Activated CD4-positive, alpha-beta memory T cell treated with anti-CD3 and anti-CD28 coated beads for 36 hours (primary cell): ENCODE measurements at regions of chr4 and their contacts with region 1.

Region 1: DNA sequence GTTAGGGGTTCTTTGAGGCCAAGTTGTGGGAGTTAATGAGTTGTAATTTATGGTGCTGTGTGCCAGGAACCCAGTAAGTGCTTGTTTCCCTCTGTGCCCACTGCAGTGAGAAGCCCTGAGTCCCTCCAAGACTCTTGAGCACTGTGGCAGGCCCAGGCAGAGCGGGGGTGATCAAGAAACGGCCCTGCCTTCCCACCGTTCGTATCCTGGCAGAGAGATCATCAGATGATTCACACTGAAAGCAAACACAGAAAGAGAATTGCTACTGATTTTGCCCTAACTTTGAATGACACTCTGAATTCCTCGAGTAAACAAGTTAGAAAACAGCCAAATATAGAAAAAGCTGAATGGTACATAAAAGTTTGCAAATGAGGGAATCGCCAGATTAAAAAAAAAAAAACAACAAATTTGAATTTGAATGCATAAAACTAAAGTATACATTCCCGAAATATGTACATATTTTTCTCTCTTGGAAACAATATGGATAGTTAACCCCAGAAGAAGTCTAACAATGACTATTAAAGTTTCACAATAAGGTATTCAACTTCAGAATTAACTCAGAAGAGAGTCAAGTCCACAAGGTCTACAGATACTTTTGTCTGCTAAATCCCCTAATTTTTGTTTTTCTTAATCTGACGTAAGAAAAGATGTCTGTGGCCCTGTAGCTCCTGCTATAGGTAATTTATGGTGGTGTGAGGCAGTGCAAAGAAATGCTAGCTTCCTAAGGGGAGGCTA is 71.8 kb downstream of the AFAP1 start:
- DNase-seq: peak; percentile 68
- H3K4me3 Mint-ChIP-seq: no peak overlapping the region
- H3K27ac Mint-ChIP-seq: peak overlapping the region; percentile 83
- H3K4me1 Mint-ChIP-seq: peaks cover 33% of the 10 kb centered on the region
- H3K27me3 Mint-ChIP-seq: peaks cover 1% of the 10 kb centered on the region

Region 2: GRCh38 chr4:7857238-7857701 is 10.6 kb before region 1 on chr4:
- CTCF ChIA-PET with region 1: interaction called, 4 read pairs
- POLR2A ChIA-PET with region 1: interaction called, 4 read pairs
- intact Hi-C with region 1: loop called (anchors 1 kb)
- DNase-seq: no peak
- H3K4me3 Mint-ChIP-seq: peak overlapping the region; percentile 17
- H3K27ac Mint-ChIP-seq: peak overlapping the region; percentile 82
- H3K4me1 Mint-ChIP-seq: peaks cover 75% of the 10 kb centered on the region
- H3K27me3 Mint-ChIP-seq: no peaks in the 10 kb centered on the region